H1 (cell line): ENCODE measurements at regions of chr3 and their contacts with region 1.

Region 1: DNA sequence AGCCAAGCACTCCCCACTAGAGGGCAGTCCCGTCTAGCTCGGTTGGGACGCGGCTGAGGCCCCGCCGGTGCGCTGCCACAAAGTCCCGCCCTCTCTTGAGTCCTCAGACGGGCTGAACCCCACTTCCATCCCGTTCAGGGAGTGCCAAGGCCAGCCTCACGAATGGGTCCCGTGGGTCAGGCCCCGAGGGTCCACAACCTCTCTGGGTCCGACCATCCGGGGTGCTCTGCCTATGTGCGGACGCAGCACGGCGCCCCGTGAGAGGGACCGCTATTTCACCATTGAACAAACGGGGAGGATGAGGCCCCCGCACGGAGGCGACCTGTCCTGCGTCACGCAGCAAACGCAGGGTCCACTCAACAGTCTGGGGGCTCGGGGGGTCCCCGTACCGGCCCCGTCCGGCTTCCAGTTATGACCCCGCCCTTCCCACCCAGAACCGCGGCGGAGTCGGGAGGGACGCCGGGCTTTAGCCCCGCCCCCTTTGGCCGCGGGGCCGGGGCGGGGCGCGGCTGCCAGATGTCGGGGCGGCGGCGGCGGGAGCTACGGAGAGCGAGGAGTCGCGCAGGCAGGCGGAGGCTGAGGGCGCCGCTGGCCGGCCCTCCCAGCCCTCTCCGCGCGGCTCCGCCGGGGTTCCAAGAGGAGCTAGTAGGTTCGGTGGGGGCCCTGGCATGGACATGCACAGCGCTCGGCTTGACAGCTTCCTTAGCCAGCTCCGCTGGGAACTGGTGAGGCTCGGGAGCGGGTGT is at the start of gene INKA1:
- DNase-seq: peak; percentile 62 to 94
- H3K4me3 ChIP-seq: peak within 1 kb of the TSS; percentile 24 to 89 (median 78)
- H3K27ac ChIP-seq: no peak within 1 kb of the TSS
- H3K4me1 ChIP-seq: peaks cover 0 to 25% (median 21%) of the 10 kb centered on the region in 4 experiments; a peak in 6 of 7 replicates
- H3K27me3 ChIP-seq: peaks cover 0 to 18% (median 16%) of the 10 kb centered on the region in 4 experiments; a peak in 6 of 7 replicates
- CTCF ChIP-seq: peak in 2 of 3 experiments; percentile 89 to 94; a peak in 3 of 4 replicates
- EP300 ChIP-seq: no peak
- POLR2A ChIP-seq: no peak
- RAD21 ChIP-seq: peak; percentile 86 to 91
- total RNA-seq, gene INKA1: 1.3 and 1.8 TPM in 2 replicates

Region 2: DNA sequence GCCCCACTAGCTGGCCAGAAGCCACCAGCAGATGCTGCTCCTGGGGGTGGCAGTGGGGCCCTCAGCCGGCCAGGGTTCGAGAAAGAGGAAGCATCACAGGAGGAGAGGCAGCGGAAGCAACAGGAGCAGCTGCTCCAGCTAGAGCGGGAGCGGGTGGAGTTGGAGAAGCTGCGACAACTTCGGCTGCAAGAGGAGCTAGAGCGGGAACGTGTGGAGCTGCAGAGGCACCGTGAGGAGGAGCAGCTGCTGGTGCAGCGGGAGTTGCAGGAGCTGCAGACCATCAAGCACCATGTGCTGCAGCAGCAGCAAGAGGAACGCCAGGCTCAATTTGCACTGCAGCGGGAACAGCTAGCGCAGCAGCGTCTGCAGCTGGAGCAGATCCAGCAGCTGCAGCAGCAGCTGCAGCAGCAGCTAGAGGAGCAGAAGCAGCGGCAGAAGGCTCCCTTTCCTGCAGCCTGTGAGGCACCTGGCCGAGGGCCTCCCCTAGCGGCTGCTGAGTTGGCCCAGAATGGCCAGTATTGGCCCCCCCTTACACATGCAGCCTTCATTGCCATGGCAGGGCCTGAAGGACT is 146.3 kb before region 1 on chr3:
- CTCF ChIA-PET with region 1: no interaction called
- POLR2A ChIA-PET with region 1: no interaction called
- DNase-seq: no peak
- H3K4me3 ChIP-seq: no peak overlapping the region
- H3K27ac ChIP-seq: no peak overlapping the region
- H3K4me1 ChIP-seq: no peaks in the 10 kb centered on the region
- H3K27me3 ChIP-seq: no peaks in the 10 kb centered on the region
- CTCF ChIP-seq: peak in 2 of 3 experiments; percentile 10 to 16; a peak in 1 of 4 replicates
- EP300 ChIP-seq: no peak
- POLR2A ChIP-seq: no peak
- RAD21 ChIP-seq: peak in 1 of 2 experiments; percentile 38; a peak in 1 of 4 replicates

Region 3: GRCh38 chr3:49780080-49780974 is 22.6 kb before region 1 on chr3:
- CTCF ChIA-PET with region 1: no interaction called
- POLR2A ChIA-PET with region 1: no interaction called
- DNase-seq: no peak
- H3K4me3 ChIP-seq: no peak overlapping the region
- H3K27ac ChIP-seq: no peak overlapping the region
- H3K4me1 ChIP-seq: no peaks in the 10 kb centered on the region
- H3K27me3 ChIP-seq: no peaks in the 10 kb centered on the region
- CTCF ChIP-seq: no peak
- EP300 ChIP-seq: no peak
- POLR2A ChIP-seq: no peak
- RAD21 ChIP-seq: no peak

Region 4: DNA sequence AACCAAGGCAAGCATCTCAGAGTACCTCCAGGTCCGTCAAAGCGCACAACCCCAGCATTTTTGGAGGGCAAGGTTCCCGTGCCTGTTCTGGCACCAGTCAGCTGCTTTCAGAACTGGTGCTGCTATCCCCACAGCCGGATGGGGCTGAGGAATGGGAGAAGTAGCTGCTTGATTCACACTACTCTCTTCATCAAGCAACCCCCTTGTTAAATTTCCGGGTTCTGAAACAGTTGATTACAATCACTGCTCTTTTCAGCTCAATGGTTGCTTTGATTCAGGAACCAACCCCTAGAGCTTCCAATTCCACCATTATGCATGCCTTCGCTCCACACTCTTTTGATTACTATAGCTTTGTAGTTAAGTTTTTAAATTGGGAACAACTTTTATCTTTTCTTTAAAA is 23.1 kb after region 1 on chr3:
- CTCF ChIA-PET with region 1: interaction called, 15 read pairs
- POLR2A ChIA-PET with region 1: interaction called, 16 read pairs
- DNase-seq: no peak
- H3K4me3 ChIP-seq: no peak overlapping the region
- H3K27ac ChIP-seq: no peak overlapping the region
- H3K4me1 ChIP-seq: no peaks in the 10 kb centered on the region
- H3K27me3 ChIP-seq: no peaks in the 10 kb centered on the region
- CTCF ChIP-seq: no peak
- EP300 ChIP-seq: no peak
- POLR2A ChIP-seq: no peak
- RAD21 ChIP-seq: no peak

Region 5: DNA sequence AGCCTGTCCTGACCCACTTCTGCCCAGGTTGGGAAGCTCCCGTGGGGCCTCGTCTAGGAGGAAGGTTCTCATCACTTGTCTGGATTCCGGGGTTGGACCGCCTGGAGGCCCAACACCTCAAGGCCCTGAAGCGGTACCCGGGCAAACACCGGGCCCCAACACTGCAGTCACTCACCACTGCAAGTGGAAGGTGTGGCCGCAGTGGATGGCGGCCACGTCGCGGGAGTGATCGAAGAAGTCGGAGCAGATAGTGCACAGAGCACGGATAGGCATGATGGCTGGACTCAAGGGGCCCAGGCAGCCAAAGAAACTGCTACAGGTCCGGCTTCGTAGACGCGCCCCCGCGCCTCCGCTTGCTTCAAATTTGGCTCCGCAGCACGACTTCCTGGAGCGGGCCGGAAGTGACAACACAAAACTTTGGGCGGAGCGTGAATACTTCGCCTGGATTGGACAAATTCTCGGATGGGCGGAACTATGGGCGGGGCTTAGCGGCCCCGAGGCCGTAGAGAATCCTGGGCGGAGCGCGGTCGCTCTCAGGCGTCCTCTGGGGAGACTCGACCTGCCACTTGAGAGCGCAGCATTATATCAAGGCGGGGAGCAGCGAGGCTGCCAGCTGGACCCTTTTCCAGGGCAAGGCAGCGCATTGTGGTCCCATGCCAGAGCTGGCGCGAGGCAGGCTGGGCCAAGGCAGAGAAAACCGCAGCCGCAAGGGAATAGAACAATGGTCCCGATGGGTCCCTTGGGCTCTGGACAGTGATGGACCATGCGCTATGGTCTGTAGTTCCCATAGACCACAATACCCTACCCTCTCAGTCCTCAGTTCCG is 53.5 kb after region 1 on chr3 and contains the start of gene TRAIP:
- CTCF ChIA-PET with region 1: interaction called, 11 read pairs
- POLR2A ChIA-PET with region 1: interaction called, 3 read pairs
- DNase-seq: peak; percentile 83 to 99
- H3K4me3 ChIP-seq: peak within 1 kb of the TSS; percentile 79 to 96 (median 84)
- H3K27ac ChIP-seq: peak within 1 kb of the TSS; percentile 13; the same call in 1 of the 2 replicates
- H3K4me1 ChIP-seq: peaks cover 0 to 7% (median 4%) of the 10 kb centered on the region in 4 experiments; a peak in 6 of 7 replicates
- H3K27me3 ChIP-seq: no peaks in the 10 kb centered on the region
- CTCF ChIP-seq: no peak
- EP300 ChIP-seq: no peak
- POLR2A ChIP-seq: peak in 1 of 2 experiments; percentile 91; a peak in 2 of 3 replicates
- RAD21 ChIP-seq: peak; percentile 7 to 10; a peak in 2 of 4 replicates
- total RNA-seq, gene TRAIP: 25.4 and 28.1 TPM in 2 replicates

Region 6: DNA sequence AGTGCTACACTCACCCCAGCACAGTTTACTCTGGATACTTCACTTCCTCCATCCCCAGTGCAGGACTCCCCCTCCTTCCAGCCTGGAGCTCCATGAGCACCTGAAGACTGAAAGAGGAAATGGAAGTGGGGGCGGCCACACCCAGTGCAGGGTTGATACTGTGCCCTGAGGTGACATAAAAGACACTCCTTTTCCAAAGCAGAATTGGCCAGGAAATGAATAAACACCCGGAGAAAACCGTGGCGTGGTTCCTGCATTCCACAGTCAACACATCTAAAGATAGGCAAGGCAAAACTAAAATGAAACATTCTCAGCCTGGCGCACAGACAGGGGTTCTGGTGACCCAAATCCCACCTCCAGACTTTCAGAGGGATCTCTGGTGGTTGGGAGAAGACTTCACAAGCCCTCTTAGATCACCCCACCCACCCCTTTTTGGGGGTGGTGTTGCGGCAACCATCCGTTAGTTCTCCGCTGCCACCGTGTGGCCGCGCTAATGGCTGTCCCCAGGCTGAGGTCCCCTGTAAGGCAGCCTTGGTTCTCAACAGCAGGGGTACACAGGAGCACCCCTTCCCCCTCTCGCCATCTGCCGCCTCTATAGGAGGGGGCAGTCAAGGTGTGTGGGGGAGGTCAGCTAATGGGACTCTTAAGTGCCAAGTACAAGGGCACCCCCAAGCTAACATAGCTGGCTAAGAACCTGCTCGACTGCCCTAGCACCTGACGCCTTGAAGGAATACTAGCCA is 103.3 kb after region 1 on chr3:
- CTCF ChIA-PET with region 1: interaction called, 28 read pairs
- POLR2A ChIA-PET with region 1: interaction called, 4 read pairs
- DNase-seq: peak in 1 of 2 experiments; percentile 77
- H3K4me3 ChIP-seq: peak overlapping the region in 1 of 4 experiments; percentile 10; a peak in 1 of 8 replicates
- H3K27ac ChIP-seq: no peak overlapping the region
- H3K4me1 ChIP-seq: peaks cover 2 to 43% (median 26%) of the 10 kb centered on the region in 4 experiments
- H3K27me3 ChIP-seq: peaks cover 0 to 20% (median 16%) of the 10 kb centered on the region in 4 experiments; a peak in 5 of 7 replicates
- CTCF ChIP-seq: peak in 2 of 3 experiments; percentile 89 to 90; a peak in 3 of 4 replicates
- EP300 ChIP-seq: no peak
- POLR2A ChIP-seq: no peak
- RAD21 ChIP-seq: peak; percentile 80 to 85